Left lung (tissue), 14 donors: ENCODE measurements at regions of chr6 and their contacts with region 1.

Region 1: DNA sequence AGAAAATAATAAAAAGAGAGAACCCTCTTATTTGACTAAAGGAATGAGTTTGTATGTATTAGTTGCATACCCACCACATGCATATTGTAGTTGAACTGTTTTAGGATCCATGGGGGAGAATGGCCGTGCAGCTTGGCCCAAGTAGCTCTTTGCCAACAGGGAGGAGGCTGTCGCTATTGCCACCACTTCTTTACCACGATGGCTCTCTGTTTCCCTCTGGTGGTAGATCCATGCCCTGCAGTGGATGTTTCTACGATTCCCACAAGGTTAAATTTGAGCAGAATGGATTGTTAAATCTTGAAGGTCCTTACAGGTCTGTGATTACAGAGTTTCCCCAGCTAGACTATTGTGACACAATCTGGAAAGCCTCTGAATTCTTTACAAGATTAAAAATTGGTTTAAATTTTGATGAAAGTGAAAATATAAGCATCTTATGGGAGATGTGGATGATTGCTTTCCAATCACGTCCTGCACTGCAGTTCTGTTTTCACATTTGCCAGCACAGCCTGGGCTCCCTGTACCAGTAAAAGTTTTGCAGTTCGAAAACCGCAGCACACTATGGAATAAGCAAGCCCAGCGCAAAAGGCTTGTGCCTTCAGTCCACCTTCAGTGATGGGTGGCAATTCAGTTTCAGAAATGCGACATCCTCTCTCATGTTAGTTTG is 34.4 kb upstream of the FNDC1 start:
- DNase-seq: peak in 2 of 4 donors; percentile 65 to 69
- ATAC-seq: peak; percentile 98
- H3K4me3 ChIP-seq: no peak overlapping the region
- H3K27ac ChIP-seq: no peak overlapping the region
- H3K4me1 ChIP-seq: no peaks in the 10 kb centered on the region
- H3K27me3 ChIP-seq: no peaks in the 10 kb centered on the region
- CTCF ChIP-seq: peak; percentile 91

Region 2: GRCh38 chr6:158958504-158959386 is 176.1 kb before region 1 on chr6:
- intact Hi-C with region 1: no loop called
- DNase-seq: no peak
- ATAC-seq: peak; percentile 46
- H3K4me3 ChIP-seq: no peak overlapping the region
- H3K27ac ChIP-seq: no peak overlapping the region
- H3K4me1 ChIP-seq: no peaks in the 10 kb centered on the region
- H3K27me3 ChIP-seq: no peaks in the 10 kb centered on the region
- CTCF ChIP-seq: no peak

Region 3: DNA sequence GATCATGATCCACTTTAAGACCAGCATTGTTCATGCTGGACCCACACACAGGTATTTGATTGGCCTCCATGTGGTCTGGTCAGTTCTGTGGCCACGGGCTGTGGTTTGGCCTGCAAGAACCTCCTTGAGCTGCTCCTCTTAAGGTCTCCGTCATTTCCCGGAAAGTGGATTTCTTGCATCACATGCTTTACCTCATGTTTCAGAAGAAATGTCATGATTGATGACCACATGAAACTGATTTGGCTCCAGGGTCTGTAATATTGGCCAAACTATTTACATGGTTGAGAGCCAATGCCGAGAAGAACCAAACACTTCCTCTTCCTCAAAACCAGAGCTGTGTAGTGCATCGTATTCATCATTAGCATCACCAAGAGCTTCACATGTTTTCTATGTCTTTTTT is 121.6 kb before region 1 on chr6:
- intact Hi-C with region 1: loop called in 1 of 2 experiments (anchors 10 kb)
- DNase-seq: no peak
- ATAC-seq: no peak
- H3K4me3 ChIP-seq: no peak overlapping the region
- H3K27ac ChIP-seq: no peak overlapping the region
- H3K4me1 ChIP-seq: peaks cover 0 to 25% of the 10 kb centered on the region in 2 donors
- H3K27me3 ChIP-seq: no peaks in the 10 kb centered on the region
- CTCF ChIP-seq: no peak

Region 4: GRCh38 chr6:159311618-159312017 is 176.8 kb after region 1 on chr6:
- intact Hi-C with region 1: no loop called
- DNase-seq: no peak
- ATAC-seq: peak; percentile 52
- H3K4me3 ChIP-seq: no peak overlapping the region
- H3K27ac ChIP-seq: no peak overlapping the region
- H3K4me1 ChIP-seq: no peaks in the 10 kb centered on the region
- H3K27me3 ChIP-seq: no peaks in the 10 kb centered on the region
- CTCF ChIP-seq: no peak